Activated CD4-positive, alpha-beta T cell treated with anti-CD3 and anti-CD28 coated beads for 36 hours (primary cell): ENCODE measurements at regions of chr1 and their contacts with region 1.

Region 1: GRCh38 chr1:112369392-112370285 is 26.4 kb upstream of the CTTNBP2NL start:
- DNase-seq: peak; percentile 93
- ATAC-seq: peak; percentile 100
- H3K4me3 Mint-ChIP-seq: no peak overlapping the region
- H3K27ac Mint-ChIP-seq: no peak overlapping the region
- H3K4me1 Mint-ChIP-seq: peaks cover 3% of the 10 kb centered on the region
- H3K27me3 Mint-ChIP-seq: peaks cover 35% of the 10 kb centered on the region

Region 2: DNA sequence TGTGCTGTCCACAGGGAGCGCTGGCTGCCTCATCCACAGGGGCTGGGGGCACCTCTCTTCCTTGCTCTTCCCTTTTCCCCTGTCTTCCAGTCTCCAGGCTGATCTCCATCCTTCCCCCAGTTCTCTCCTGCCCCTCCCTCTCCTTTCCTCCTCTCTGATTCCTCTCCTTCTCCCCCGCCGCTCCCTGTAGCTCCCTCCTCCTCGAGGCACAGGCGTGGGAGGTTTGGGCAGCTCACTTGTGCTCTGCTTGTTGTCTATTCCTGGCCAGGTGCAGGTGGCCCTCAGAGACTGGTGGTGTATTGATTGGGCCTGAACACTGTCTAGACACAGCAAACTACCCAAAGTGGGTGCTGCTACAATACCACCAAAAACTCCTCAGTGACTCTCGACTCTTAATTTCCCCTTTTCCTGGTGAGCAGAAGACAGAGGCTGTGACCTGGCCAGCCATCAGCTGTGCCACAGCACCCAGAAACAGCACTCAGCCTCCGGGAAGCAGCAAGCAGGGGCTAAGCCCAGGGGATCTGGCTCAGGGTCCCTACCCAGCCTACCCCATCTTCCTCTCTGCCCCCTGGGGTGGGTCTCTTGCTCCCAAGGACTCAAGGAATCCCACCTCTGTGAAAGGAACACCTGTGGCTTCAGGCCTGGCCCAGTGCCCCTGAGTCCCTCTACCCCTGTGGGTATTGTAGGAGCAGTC is 520.6 kb before region 1 on chr1:
- CTCF ChIA-PET with region 1: no interaction called
- POLR2A ChIA-PET with region 1: no interaction called
- intact Hi-C with region 1: no loop called
- DNase-seq: no peak
- ATAC-seq: no peak
- H3K4me3 Mint-ChIP-seq: no peak overlapping the region
- H3K27ac Mint-ChIP-seq: no peak overlapping the region
- H3K4me1 Mint-ChIP-seq: no peaks in the 10 kb centered on the region
- H3K27me3 Mint-ChIP-seq: peaks cover 16% of the 10 kb centered on the region

Region 3: GRCh38 chr1:112298558-112298957 is 71.1 kb before region 1 on chr1:
- CTCF ChIA-PET with region 1: no interaction called
- POLR2A ChIA-PET with region 1: no interaction called
- intact Hi-C with region 1: loop called (anchors 2 kb)
- DNase-seq: peak; percentile 56
- ATAC-seq: no peak
- H3K4me3 Mint-ChIP-seq: no peak overlapping the region
- H3K27ac Mint-ChIP-seq: no peak overlapping the region
- H3K4me1 Mint-ChIP-seq: no peaks in the 10 kb centered on the region
- H3K27me3 Mint-ChIP-seq: peaks cover 7% of the 10 kb centered on the region

Region 4: DNA sequence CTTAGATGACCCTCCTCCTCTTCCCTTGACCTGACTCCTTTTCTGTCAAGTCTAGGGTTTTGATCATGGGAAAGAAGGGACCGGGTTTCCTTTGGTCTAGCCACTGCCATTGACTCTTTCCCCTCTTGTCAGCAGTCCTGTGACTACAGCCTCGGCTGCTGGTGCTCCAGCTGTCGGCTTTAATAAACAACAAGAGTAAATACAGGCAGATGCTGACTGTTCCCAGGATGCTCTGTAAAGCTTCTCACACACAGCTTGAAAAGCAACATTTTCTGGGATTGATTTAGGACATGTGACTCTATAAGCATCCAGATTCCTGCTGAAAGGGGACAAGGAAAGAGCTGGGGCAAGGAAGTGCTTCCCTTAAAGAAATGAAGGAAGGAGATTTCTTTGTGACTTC is 27.1 kb before region 1 on chr1:
- CTCF ChIA-PET with region 1: interaction called, 11 read pairs
- POLR2A ChIA-PET with region 1: no interaction called
- intact Hi-C with region 1: no loop called
- DNase-seq: no peak
- ATAC-seq: no peak
- H3K4me3 Mint-ChIP-seq: no peak overlapping the region
- H3K27ac Mint-ChIP-seq: no peak overlapping the region
- H3K4me1 Mint-ChIP-seq: peaks cover 18% of the 10 kb centered on the region
- H3K27me3 Mint-ChIP-seq: no peaks in the 10 kb centered on the region

Region 5: GRCh38 chr1:112358798-112359408 is 10.7 kb before region 1 on chr1:
- CTCF ChIA-PET with region 1: interaction called, 44 read pairs
- POLR2A ChIA-PET with region 1: no interaction called
- intact Hi-C with region 1: no loop called
- DNase-seq: peak; percentile 67
- ATAC-seq: peak; percentile 66
- H3K4me3 Mint-ChIP-seq: no peak overlapping the region
- H3K27ac Mint-ChIP-seq: no peak overlapping the region
- H3K4me1 Mint-ChIP-seq: no peaks in the 10 kb centered on the region
- H3K27me3 Mint-ChIP-seq: peaks cover 17% of the 10 kb centered on the region

Region 6: DNA sequence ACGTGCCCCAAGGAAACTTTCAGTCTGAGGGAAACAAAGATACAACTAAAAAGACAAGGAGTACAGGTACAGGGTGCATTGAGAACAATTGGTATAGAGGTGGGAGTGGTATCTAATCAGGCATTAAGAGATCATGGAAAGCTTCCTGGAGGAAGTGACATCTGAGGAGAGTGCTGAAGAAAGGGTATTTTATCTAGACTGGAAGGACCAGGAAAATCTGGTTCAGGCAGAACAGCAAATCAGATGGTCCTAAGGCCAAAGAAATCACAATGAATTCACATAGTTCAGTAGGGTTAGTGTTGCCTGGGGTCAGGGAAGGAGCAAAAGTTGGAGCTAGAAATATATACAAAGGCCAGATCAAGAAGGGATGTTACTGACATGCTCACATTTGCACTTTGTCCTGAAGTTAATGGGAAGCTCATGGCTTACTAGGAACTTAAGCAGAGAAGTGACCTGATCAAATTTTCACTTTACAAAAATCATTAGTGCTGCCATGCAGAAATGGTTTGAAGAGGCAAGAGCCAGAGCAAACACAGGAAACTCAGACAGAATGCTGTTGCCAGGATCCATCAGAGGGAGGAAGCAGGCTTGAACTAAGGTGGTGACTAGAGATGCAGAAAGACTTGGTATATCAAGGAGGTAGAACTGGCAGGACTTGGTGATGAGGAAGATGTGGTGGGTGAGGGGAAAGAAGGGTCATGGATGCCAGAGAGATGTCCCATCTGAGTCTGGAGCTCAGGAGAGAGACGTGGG is 11.9 kb after region 1 on chr1:
- CTCF ChIA-PET with region 1: interaction called, 23 read pairs
- POLR2A ChIA-PET with region 1: no interaction called
- intact Hi-C with region 1: no loop called
- DNase-seq: no peak
- ATAC-seq: no peak
- H3K4me3 Mint-ChIP-seq: no peak overlapping the region
- H3K27ac Mint-ChIP-seq: no peak overlapping the region
- H3K4me1 Mint-ChIP-seq: no peaks in the 10 kb centered on the region
- H3K27me3 Mint-ChIP-seq: peaks cover 27% of the 10 kb centered on the region